Cardiac septum (tissue), 1 donor: ENCODE measurements at regions of chr11 and their contacts with region 1.

Region 1: GRCh38 chr11:73876424-73877300 is at the starts of genes COA4 and PAAF1:
- DNase-seq: peak; percentile 95
- total RNA-seq, gene COA4: 52.9 TPM
- total RNA-seq, gene PAAF1: 14.9 TPM

Region 2: DNA sequence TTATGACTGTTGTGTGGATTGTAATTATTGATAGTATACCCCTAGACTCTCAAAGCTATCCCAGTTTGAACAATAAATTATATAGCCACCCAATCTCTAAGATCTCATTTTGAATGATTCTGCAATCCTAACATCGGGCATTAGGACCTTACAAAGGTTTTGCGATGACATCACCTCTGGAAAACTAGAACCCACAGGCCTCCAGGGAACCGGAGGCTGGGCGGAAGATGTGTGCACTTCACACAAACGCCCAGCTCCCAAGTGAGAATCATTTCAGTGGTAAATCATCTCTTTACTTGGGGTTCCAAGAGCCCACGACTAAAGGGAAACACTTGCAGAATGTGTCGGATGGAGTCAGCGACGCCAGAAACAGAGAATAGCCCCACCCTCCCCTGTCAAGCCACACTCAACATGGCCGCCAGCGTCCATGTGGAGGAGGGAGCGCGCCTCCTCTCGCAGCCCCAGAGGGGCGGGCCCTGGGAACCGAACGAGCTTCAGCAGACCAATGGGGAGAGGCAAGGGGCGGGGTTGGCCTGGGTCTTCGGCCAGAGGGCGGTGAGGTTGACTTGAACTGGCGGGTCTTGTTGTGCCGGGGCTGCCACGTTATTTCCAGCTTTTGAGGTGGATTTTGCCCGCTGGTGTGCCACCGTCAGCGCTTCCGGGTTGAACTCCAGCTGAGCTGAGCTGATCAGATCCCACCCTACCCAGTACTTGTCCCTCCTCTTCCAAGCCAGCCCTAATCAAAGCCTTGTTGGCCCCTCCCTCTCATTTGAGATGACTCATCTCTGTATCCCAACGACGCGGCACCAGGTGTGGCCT is 97.4 kb before region 1 on chr11:
- intact Hi-C with region 1: loop called (anchors 2 kb)
- DNase-seq: peak; percentile 99

Region 3: DNA sequence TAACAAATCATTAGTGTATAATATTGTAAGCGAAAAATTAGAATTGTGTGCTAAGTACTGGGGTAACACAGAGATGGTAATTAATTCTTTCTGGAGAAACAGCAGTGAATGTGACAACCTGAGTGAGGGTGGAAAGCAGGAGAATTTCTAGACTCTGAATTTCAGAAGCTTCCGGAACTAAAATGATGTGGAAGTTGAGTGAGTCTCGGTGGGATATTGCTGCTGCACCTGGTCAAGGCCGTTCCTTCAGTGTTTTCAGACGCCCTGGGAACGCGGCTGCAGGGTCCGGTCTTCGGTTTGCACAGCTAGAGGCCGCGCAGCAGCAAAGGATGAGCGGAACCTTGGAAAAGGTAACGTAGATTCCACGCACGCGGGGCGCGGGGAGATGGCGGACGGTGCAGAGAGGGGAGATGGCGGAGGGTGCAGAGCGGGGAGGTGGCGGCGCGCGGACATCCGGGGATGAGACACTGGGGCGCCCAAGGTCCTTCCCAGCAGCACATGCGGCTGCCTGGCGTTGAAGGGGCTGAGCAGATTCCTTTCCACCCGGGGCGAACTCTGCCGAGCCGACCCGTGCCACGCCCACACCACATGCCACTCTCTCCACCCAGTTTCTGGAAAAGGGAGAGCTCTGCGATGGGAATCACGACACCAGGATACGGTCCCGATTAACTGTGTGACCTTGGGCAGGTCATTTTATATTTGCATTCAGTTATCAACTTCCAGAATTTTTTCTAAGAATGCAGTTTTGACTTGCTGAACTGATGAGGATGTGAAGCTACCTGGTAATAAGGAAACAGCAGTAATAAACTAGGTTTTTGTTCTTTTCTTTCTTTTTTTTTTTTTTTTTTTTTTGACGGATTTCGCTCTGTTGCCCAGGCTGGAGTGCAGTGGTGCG is 88.8 kb before region 1 on chr11 and contains the start of gene MRPL48:
- intact Hi-C with region 1: loop called (anchors 2 kb)
- DNase-seq: peak; percentile 95
- total RNA-seq, gene MRPL48: 30.8 TPM